K562 (cell line): ENCODE measurements at regions of chr13 and their contacts with region 1.

Region 1: GRCh38 chr13:107941345-107942029 is 273.8 kb downstream of the LIG4 start:
- DNase-seq: peak in 1 of 4 experiments; percentile 55
- ATAC-seq: peak; percentile 64
- H3K4me3 ChIP-seq: no peak overlapping the region
- H3K27ac ChIP-seq: peak overlapping the region; percentile 52
- H3K4me1 ChIP-seq: peaks cover 15 to 31% of the 10 kb centered on the region in 2 experiments
- H3K27me3 ChIP-seq: no peaks in the 10 kb centered on the region; a peak in 1 of 5 replicates
- CTCF ChIP-seq: no peak
- EP300 ChIP-seq: no peak
- POLR2A ChIP-seq: no peak
- RAD21 ChIP-seq: no peak

Region 2: GRCh38 chr13:107834717-107835116 is 106.8 kb before region 1 on chr13:
- CTCF ChIA-PET with region 1: no interaction called
- POLR2A ChIA-PET with region 1: no interaction called
- in situ Hi-C with region 1: no loop called
- intact Hi-C with region 1: no loop called
- DNase-seq: no peak
- ATAC-seq: no peak
- H3K4me3 ChIP-seq: no peak overlapping the region
- H3K27ac ChIP-seq: no peak overlapping the region
- H3K4me1 ChIP-seq: no peaks in the 10 kb centered on the region
- H3K27me3 ChIP-seq: no peaks in the 10 kb centered on the region
- CTCF ChIP-seq: no peak
- EP300 ChIP-seq: no peak
- POLR2A ChIP-seq: no peak
- RAD21 ChIP-seq: no peak

Region 3: DNA sequence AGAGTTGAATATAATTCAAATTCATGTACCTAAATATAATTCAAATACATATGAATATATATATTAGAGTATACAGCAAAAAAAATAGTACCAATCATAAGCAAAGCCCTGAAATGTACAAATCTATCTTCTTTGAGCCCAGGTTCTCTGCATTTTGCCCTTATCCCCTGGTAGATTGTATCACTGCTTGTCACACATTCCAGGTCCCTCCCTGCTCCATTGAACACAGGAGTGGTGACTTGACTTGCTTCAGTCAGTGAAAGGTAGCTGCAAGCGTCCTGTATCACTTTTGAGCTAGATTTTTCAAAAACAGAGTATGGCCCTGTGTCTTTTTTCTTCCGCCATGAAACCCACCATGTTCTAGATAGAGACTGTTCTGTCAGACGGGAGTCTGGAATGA is 95.6 kb before region 1 on chr13:
- CTCF ChIA-PET with region 1: no interaction called
- POLR2A ChIA-PET with region 1: no interaction called
- in situ Hi-C with region 1: no loop called
- intact Hi-C with region 1: no loop called
- DNase-seq: no peak
- ATAC-seq: no peak
- H3K4me3 ChIP-seq: no peak overlapping the region
- H3K27ac ChIP-seq: no peak overlapping the region
- H3K4me1 ChIP-seq: no peaks in the 10 kb centered on the region
- H3K27me3 ChIP-seq: no peaks in the 10 kb centered on the region
- CTCF ChIP-seq: no peak
- EP300 ChIP-seq: no peak
- POLR2A ChIP-seq: no peak
- RAD21 ChIP-seq: no peak

Region 4: DNA sequence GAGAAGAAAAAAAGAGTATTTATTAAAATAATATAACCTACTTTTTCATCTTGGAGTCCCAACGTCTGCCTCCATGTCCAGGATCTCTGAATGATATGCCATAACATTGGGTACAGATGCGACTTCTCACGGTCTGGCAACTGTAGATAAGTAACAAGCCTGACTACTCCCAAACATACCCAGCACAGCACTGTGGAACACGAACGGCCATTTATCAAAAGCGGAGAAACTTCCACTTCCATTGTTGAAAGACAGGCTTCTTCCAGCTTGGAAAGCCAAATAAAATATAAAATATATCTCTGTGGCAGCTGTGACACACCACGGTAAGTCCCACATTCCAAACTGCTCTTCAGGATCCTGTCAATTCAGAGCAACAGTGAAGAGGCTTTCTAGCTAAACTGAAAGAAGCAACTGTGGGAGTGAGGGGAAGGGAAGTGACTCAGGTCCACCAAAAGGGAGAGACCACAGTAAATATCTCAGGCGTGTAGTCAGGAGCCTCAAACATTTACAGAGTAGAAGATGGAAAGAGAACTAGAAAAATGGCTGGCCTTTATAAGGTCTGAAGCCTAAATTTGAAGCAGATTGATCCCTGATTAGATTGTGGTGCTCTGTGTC is 57.8 kb before region 1 on chr13:
- CTCF ChIA-PET with region 1: no interaction called
- POLR2A ChIA-PET with region 1: interaction called, 3 read pairs
- in situ Hi-C with region 1: no loop called
- intact Hi-C with region 1: loop called (anchors 2 kb)
- DNase-seq: peak; percentile 84 to 98 (median 93)
- ATAC-seq: peak; percentile 89
- H3K4me3 ChIP-seq: peak overlapping the region; percentile 32
- H3K27ac ChIP-seq: peak overlapping the region; percentile 74
- H3K4me1 ChIP-seq: peaks cover 7 to 42% of the 10 kb centered on the region in 2 experiments; a peak in 4 of 5 replicates
- H3K27me3 ChIP-seq: no peaks in the 10 kb centered on the region
- CTCF ChIP-seq: no peak
- EP300 ChIP-seq: no peak
- POLR2A ChIP-seq: no peak
- RAD21 ChIP-seq: no peak

Region 5: GRCh38 chr13:107907065-107907805 is 34.3 kb before region 1 on chr13:
- CTCF ChIA-PET with region 1: no interaction called
- POLR2A ChIA-PET with region 1: interaction called, 11 read pairs
- in situ Hi-C with region 1: no loop called
- intact Hi-C with region 1: loop called (anchors 2 kb)
- DNase-seq: no peak
- ATAC-seq: peak; percentile 6
- H3K4me3 ChIP-seq: no peak overlapping the region
- H3K27ac ChIP-seq: no peak overlapping the region
- H3K4me1 ChIP-seq: peaks cover 3 to 32% of the 10 kb centered on the region in 2 experiments
- H3K27me3 ChIP-seq: no peaks in the 10 kb centered on the region
- CTCF ChIP-seq: no peak
- EP300 ChIP-seq: no peak
- POLR2A ChIP-seq: no peak
- RAD21 ChIP-seq: no peak

Region 6: DNA sequence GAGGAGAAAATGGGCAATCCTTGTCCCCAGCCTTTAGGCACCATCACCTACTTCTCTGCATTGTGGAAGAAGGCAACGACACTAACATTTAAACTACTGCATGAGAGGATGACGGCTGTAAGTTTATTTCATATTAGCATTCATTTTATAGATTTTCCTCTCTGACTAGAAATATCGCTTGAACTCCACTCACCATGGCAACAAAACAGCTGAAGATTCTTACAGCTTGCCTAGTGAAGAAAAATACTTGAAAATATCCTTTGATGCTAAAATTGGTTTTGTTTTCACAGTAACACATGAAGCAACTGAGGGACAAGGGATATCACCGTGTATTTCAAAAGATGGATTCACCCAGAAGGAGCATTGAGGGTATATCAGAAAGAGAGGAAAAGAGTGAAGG is 10.4 kb before region 1 on chr13:
- CTCF ChIA-PET with region 1: no interaction called
- POLR2A ChIA-PET with region 1: interaction called, 20 read pairs
- in situ Hi-C with region 1: no loop called
- intact Hi-C with region 1: no loop called
- DNase-seq: peak in 1 of 4 experiments; percentile 29
- ATAC-seq: peak; percentile 5; the same call in 2 of the 3 replicates
- H3K4me3 ChIP-seq: no peak overlapping the region
- H3K27ac ChIP-seq: no peak overlapping the region
- H3K4me1 ChIP-seq: peaks cover 0 to 5% of the 10 kb centered on the region in 2 experiments; a peak in 3 of 5 replicates
- H3K27me3 ChIP-seq: no peaks in the 10 kb centered on the region
- CTCF ChIP-seq: no peak
- EP300 ChIP-seq: no peak
- POLR2A ChIP-seq: no peak
- RAD21 ChIP-seq: no peak

Region 7: DNA sequence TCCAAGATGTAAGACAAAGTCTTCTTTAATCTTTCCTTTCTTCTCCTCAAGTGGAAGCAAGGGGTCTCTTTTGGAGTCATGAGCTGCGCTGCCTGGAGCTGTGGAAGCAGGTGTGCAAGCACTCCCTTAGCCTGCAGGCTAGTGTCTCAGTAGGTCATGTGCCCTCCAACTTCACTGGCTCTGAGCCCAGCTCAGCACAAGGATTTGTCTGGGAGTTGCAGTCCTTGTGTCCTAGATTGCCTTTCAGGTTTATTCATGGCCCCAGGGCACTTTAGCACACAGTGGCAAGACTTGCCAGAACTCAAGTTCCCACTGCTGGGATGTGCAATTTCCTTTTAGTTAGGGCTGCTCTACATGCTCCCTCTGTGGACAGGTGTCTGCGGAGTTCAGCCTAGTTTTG is 62.1 kb after region 1 on chr13:
- CTCF ChIA-PET with region 1: no interaction called
- POLR2A ChIA-PET with region 1: no interaction called
- in situ Hi-C with region 1: no loop called
- intact Hi-C with region 1: loop called (anchors 2 kb)
- DNase-seq: peak in 1 of 4 experiments; percentile 44
- ATAC-seq: peak; percentile 40
- H3K4me3 ChIP-seq: no peak overlapping the region
- H3K27ac ChIP-seq: no peak overlapping the region
- H3K4me1 ChIP-seq: peaks cover 3 to 14% of the 10 kb centered on the region in 2 experiments
- H3K27me3 ChIP-seq: no peaks in the 10 kb centered on the region; a peak in 2 of 5 replicates
- CTCF ChIP-seq: no peak
- EP300 ChIP-seq: no peak
- POLR2A ChIP-seq: no peak
- RAD21 ChIP-seq: no peak

Region 8: GRCh38 chr13:108126056-108126455 is 184.6 kb after region 1 on chr13:
- CTCF ChIA-PET with region 1: no interaction called
- POLR2A ChIA-PET with region 1: no interaction called
- in situ Hi-C with region 1: no loop called
- intact Hi-C with region 1: no loop called
- DNase-seq: no peak
- ATAC-seq: no peak
- H3K4me3 ChIP-seq: no peak overlapping the region
- H3K27ac ChIP-seq: no peak overlapping the region
- H3K4me1 ChIP-seq: no peaks in the 10 kb centered on the region
- H3K27me3 ChIP-seq: no peaks in the 10 kb centered on the region
- CTCF ChIP-seq: no peak
- EP300 ChIP-seq: no peak
- POLR2A ChIP-seq: no peak
- RAD21 ChIP-seq: no peak

Region 9: DNA sequence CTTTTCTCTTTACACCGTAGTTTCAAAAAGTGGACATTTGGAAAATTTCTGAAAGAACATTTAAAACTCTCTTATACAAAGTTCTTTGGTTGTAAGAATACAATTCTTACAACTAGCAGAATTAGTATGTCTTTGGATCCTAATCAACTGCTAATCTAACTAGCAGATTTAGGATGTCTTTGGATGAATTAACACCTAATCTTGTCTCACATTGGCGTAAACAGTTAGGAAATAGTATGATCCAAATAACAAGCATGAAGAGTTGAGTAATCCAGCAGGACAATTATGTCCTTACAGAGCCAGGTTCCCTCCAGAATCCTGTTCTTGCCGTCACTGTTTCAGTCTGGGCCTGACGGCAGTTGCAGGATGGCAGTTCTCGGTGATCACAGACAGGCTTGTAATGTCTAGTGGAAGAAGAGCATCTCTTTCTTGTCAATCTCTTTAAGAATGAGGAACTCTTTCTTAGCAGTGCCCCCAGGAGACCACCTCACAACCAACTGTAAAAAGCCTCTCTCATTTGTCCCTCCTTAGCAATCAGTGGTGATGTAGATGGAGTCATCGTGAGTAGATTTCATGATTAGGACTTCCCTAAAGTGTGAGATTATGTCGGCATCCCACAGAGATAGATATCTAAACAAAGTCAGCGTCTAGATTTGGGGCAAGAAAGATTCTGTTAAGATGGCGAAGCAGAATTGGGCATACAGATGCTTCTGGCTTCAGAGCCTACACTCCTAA is 322.3 kb after region 1 on chr13:
- CTCF ChIA-PET with region 1: no interaction called
- POLR2A ChIA-PET with region 1: no interaction called
- in situ Hi-C with region 1: no loop called
- intact Hi-C with region 1: no loop called
- DNase-seq: no peak
- ATAC-seq: no peak
- H3K4me3 ChIP-seq: no peak overlapping the region
- H3K27ac ChIP-seq: no peak overlapping the region
- H3K4me1 ChIP-seq: no peaks in the 10 kb centered on the region; a peak in 1 of 5 replicates
- H3K27me3 ChIP-seq: no peaks in the 10 kb centered on the region
- CTCF ChIP-seq: no peak
- EP300 ChIP-seq: no peak
- POLR2A ChIP-seq: no peak
- RAD21 ChIP-seq: no peak